ENCODE measurements at regions of chr14 and their contacts with region 1.

Region 1: DNA sequence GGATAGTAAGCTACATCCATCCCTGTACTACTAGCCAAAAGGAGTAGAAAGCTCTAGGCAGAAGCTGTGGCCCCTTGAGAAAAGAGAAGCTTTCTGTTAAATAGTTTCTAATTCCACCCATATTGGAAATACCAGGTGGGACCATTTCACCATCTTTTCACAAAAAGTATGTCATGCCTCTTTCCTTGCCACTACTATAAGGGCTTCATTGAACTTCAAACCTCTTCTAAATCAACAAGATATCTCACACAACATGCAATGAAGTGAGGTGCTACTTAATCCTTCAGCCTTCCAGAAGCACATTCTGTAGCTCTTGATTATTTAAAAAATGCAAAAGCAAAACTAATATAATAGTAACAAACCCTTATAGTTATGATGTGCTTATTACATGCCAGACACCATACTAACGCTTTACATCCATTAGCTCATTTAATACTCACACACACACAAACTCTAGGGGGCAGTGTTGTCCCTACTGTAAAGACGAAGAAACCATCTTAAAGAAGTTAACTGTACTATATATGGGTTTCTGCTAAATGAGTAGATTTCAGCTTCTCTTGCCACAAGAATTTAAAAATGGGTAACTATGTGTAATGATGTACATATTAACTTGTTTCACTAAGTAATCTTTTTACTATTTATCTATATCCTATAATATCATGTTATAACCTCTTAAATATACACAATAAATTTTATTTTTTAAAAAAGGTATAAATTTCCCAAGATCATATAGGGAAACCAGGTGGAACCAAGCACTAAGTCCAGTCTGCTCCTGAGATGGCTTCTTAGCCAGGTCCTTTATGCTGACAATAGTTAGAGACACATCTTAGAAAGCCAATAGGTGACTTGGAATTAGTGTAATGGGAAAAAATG is 124.4 kb downstream of the RPS29 start:
- DNase-seq: peak; percentile 76
- ATAC-seq: peak; percentile 81
- H3K4me3 Mint-ChIP-seq: no peak overlapping the region
- H3K27ac Mint-ChIP-seq: no peak overlapping the region
- H3K4me1 Mint-ChIP-seq: no peaks in the 10 kb centered on the region
- H3K27me3 Mint-ChIP-seq: no peaks in the 10 kb centered on the region

Region 2: GRCh38 chr14:49280566-49280965 is 181.2 kb before region 1 on chr14:
- CTCF ChIA-PET with region 1: no interaction called
- POLR2A ChIA-PET with region 1: no interaction called
- DNase-seq: no peak
- ATAC-seq: no peak
- H3K4me3 Mint-ChIP-seq: no peak overlapping the region
- H3K27ac Mint-ChIP-seq: no peak overlapping the region
- H3K4me1 Mint-ChIP-seq: no peaks in the 10 kb centered on the region
- H3K27me3 Mint-ChIP-seq: peaks cover 3% of the 10 kb centered on the region

Region 3: DNA sequence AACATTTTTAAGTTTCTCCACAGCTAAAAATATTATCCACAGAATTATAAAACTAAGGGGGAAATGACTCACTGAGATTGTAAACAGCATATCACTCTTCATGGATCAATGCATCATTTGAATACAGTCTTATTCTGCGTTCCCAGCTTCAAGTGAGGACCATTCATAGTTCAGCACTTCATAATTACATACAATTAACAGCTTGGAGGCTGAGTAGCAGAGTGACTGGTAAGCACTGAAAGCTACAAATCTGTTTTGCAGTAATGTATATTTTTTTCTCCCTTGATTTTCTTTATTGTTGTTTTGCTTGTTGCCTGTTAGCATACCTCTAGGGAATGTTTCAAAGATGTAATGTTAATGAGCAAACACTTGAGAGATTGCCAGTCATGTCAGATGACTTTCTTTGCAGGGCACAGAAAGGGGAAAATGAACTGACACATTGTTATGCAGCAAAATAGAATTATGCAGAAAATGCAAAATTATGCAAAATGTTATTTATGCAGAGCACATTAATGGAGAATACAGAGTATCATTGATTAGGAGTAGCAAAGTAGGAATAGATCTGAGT is 14.1 kb before region 1 on chr14:
- CTCF ChIA-PET with region 1: interaction called, 22 read pairs
- POLR2A ChIA-PET with region 1: no interaction called
- DNase-seq: no peak
- ATAC-seq: no peak
- H3K4me3 Mint-ChIP-seq: no peak overlapping the region
- H3K27ac Mint-ChIP-seq: no peak overlapping the region
- H3K4me1 Mint-ChIP-seq: no peaks in the 10 kb centered on the region
- H3K27me3 Mint-ChIP-seq: peaks cover 6% of the 10 kb centered on the region

Region 4: GRCh38 chr14:49483268-49483667 is 21.5 kb after region 1 on chr14:
- CTCF ChIA-PET with region 1: interaction called, 15 read pairs
- POLR2A ChIA-PET with region 1: no interaction called
- DNase-seq: no peak
- ATAC-seq: no peak
- H3K4me3 Mint-ChIP-seq: no peak overlapping the region
- H3K27ac Mint-ChIP-seq: no peak overlapping the region
- H3K4me1 Mint-ChIP-seq: peaks cover 8% of the 10 kb centered on the region
- H3K27me3 Mint-ChIP-seq: peaks cover 10% of the 10 kb centered on the region

Region 5: GRCh38 chr14:49497725-49498348 is 36.1 kb after region 1 on chr14:
- CTCF ChIA-PET with region 1: interaction called, 85 read pairs
- POLR2A ChIA-PET with region 1: no interaction called
- DNase-seq: peak; percentile 24
- ATAC-seq: peak; percentile 65
- H3K4me3 Mint-ChIP-seq: no peak overlapping the region
- H3K27ac Mint-ChIP-seq: no peak overlapping the region
- H3K4me1 Mint-ChIP-seq: no peaks in the 10 kb centered on the region
- H3K27me3 Mint-ChIP-seq: peaks cover 21% of the 10 kb centered on the region

Region 6: DNA sequence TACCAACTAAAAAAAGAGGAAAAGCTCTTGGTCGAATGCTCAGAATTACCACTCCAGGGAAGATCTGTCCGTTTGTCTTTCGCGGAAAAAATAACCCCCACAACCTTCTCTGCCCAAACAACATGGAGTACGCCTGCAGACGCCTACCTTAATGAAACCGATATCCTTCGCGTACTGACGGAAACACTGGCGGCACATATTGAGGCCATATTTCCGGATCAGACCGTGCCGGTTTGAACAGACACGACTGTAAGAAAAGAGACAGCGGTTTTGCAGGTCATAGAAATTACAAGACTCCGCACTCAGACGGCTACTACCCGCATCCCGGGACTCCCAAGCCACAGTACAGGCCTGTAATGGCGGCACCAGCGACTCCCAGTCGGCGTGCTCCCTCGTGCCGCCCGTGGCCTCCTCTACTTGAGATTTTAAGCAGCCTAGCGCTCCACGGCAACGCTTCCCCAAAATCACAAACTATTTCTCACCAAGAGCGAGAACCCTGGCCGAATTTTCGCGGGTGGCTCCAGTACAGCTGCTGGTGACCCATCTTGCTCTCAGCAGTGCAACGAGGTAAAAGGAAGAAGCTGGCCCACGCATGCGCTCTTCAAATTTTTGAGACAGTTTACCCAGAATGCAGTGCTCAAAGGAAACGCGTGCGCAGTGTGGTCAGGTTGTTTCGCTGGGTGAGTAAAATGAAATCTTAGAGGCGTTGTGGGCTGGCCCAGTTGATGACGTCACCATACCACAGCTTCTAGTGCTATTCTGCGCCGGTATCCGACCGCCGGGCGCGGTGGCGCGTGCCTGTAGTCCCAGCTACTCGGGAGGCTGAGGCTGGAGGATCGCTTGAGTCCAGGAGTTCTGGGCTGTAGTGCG is 124.3 kb after region 1 on chr14 and contains the start of gene RPS29:
- CTCF ChIA-PET with region 1: interaction called, 16 read pairs
- POLR2A ChIA-PET with region 1: interaction called, 6 read pairs
- DNase-seq: peak; percentile 99
- ATAC-seq: peak; percentile 93
- H3K4me3 Mint-ChIP-seq: peak within 1 kb of the TSS; percentile 81
- H3K27ac Mint-ChIP-seq: peak within 1 kb of the TSS; percentile 99
- H3K4me1 Mint-ChIP-seq: peaks cover 38% of the 10 kb centered on the region
- H3K27me3 Mint-ChIP-seq: no peaks in the 10 kb centered on the region
- total RNA-seq, gene RPS29: 1,224 to 1,602 TPM